Activated CD4-positive, alpha-beta T cell treated with anti-CD3 and anti-CD28 coated beads for 36 hours (primary cell): ENCODE measurements at regions of chr17 and their contacts with region 1.

Region 1: GRCh38 chr17:59753522-59754467 is 46.3 kb downstream of the VMP1 start:
- DNase-seq: no peak
- ATAC-seq: peak; percentile 47
- H3K4me3 Mint-ChIP-seq: peak overlapping the region; percentile 66
- H3K27ac Mint-ChIP-seq: peak overlapping the region; percentile 92
- H3K4me1 Mint-ChIP-seq: peaks cover 71% of the 10 kb centered on the region
- H3K27me3 Mint-ChIP-seq: no peaks in the 10 kb centered on the region

Region 2: DNA sequence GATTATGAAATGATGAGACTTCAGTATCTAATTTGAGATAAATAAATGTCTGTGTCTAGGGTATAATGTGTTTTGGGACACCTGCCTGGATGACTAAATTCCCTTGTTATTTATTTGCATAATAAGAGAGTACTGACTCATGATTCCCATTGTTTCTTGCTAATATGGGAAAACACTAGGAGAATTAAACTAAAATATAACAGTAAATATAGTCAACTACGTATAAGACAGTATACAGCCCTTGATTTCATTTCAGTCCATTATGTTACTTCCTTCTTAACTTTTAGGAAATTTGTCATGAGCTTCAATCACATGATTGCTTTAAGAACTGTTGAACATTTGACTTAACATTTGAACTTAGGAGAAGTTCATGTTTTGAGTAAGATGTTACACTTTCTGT is 16.1 kb after region 1 on chr17:
- CTCF ChIA-PET with region 1: interaction called, 66 read pairs
- POLR2A ChIA-PET with region 1: interaction called, 50 read pairs
- intact Hi-C with region 1: no loop called
- DNase-seq: no peak
- ATAC-seq: no peak
- H3K4me3 Mint-ChIP-seq: no peak overlapping the region
- H3K27ac Mint-ChIP-seq: peak overlapping the region; percentile 47
- H3K4me1 Mint-ChIP-seq: peaks cover 46% of the 10 kb centered on the region
- H3K27me3 Mint-ChIP-seq: no peaks in the 10 kb centered on the region

Region 3: DNA sequence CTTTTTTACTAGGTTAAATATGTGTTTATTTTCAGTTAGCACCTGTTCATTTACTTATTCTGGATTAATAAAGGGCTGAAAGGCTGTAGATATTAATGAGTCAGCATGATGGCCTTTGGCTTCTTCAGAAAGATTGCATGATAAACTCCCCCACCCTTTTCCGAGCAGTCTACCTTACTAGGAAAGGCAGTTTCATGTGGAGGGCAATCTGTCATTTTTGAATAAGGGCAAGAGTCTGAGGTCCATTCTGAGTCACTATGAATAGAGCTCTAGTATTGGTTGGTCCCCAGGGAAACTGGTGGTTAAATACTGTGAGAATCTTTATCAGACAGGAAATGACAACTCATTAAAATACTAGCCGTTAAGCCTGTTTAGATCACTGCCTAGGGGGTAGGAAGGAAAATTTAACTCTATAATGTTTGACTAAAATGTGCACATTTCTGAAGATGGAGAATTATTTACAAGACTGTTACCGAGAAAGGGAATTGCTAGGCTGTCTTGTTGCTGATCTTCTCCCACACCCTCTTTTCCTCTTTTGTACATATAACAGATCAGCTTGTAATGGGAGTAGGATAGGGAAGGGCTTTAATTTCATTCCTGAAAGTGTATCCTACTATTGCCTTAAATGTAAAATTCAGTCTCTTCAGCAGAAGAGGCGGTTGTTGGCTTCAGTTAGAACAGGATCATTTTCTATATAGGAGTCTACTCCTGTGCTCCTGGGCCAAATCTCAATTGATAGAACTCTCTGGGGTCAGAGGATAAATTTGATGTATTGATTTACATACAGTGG is 75.6 kb after region 1 on chr17:
- CTCF ChIA-PET with region 1: interaction called, 113 read pairs
- POLR2A ChIA-PET with region 1: interaction called, 101 read pairs
- intact Hi-C with region 1: loop called (anchors 1 kb)
- DNase-seq: peak; percentile 65
- ATAC-seq: peak; percentile 72
- H3K4me3 Mint-ChIP-seq: peak overlapping the region; percentile 78
- H3K27ac Mint-ChIP-seq: peak overlapping the region; percentile 93
- H3K4me1 Mint-ChIP-seq: peaks cover 87% of the 10 kb centered on the region
- H3K27me3 Mint-ChIP-seq: no peaks in the 10 kb centered on the region

Region 4: DNA sequence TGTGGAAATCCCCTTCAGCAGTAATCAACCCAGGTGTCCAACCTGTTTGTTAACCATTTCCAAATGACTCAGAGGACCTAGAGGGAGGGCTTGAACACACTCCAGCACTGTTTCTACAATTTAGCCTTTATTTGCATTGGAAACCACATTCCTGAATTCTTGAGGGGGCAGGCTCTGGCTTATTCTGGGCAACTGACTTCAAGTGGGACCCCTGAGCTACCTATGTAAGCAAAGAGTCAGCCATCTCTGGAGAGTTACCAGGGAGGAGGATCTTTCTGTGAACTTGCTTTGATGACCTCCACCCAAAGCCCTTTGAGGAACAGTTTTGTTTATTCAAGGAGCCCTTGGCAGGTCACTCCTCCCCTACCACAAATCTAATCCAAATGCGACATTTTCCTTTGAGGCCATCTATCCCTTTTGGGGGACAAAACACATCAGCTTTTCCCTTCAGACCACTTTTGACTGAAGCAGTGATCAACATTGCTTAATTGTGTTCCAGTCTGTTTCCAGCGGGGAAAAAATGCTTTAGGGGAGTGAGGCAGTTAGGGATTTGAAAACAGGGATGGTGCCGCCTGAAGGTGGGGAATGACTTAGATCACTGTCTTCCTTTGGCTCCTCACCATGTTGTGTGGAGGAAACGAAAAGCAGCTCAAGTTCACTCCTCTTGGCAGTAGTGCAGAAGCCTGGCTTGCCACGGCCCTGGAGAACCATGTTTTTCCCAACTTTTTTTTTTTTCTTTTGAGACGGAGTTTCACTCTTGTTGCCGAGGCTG is 92.8 kb after region 1 on chr17:
- CTCF ChIA-PET with region 1: interaction called, 73 read pairs
- POLR2A ChIA-PET with region 1: interaction called, 252 read pairs
- intact Hi-C with region 1: loop called (anchors 1 kb)
- DNase-seq: no peak
- ATAC-seq: peak; percentile 21
- H3K4me3 Mint-ChIP-seq: peak overlapping the region; percentile 46
- H3K27ac Mint-ChIP-seq: peak overlapping the region; percentile 87
- H3K4me1 Mint-ChIP-seq: peaks cover 73% of the 10 kb centered on the region
- H3K27me3 Mint-ChIP-seq: no peaks in the 10 kb centered on the region

Region 5: DNA sequence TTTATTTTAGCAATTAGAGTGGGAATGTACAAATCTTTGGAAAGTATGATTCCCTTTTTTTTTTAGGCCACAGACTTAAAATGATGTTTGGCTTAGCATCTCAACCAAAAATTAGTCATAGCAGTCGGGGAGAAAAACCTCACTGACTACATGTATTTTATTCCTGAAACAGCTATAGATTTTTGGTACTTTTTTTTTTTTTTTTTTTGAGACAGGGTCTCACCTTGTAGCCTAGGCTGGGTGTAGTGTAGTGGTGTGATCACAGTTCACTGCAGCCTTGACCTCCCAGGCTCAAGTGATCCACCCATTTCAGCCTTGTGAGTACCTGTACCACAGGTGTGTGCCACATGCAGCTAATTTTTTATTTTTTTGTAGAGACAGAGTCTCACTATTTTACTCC is 187.3 kb after region 1 on chr17:
- CTCF ChIA-PET with region 1: interaction called, 3 read pairs
- POLR2A ChIA-PET with region 1: interaction called, 3 read pairs
- intact Hi-C with region 1: loop called in 1 of 2 experiments (anchors 2 kb)
- DNase-seq: peak; percentile 31
- ATAC-seq: peak; percentile 51
- H3K4me3 Mint-ChIP-seq: peak overlapping the region; percentile 27
- H3K27ac Mint-ChIP-seq: peak overlapping the region; percentile 94
- H3K4me1 Mint-ChIP-seq: peaks cover 53% of the 10 kb centered on the region
- H3K27me3 Mint-ChIP-seq: no peaks in the 10 kb centered on the region